ENCODE measurements at regions of chr7 and their contacts with region 1.

Region 1: DNA sequence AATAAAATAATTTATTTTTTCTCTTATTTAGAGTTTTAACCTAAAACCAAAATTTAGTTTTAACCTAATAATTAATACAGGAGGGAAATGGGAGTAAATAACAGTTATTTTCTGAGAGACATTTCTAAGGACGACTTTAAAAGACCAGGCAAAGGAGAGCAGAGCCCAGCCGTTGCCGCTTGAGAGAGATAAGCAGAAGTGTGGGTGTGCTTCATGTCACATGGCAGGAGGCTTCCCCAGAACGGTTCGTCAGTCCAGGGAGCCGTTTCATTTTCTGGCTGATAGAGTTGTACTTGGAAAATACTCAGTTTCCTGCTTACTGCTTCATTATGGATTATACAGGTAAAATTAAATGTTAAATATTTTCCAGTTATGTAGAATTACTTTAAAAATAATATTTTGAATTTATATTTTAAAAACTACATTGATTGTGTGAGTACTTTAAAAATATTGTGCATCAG is 61.4 kb downstream of the ST7 start:
- DNase-seq: peak; percentile 84

Region 2: DNA sequence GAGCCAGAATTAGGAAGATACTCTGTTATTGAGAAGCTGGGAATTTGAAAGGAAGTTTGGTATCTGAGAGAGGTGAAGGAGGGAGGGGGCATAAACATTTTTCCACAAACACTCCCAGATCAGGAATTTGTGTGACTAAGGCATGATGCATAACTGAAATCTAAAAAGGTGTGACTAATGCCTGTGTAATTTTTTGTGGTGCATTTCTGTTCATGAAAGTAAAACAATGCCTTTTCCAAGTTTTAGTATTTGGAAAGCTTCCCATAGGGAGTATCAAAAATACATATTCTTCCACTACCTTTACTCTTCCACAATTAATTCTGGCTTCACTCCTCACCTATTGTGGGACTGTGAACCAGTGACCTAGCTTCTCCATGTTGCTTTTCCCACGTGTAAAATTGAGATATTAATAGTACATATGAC is 571.6 kb before region 1 on chr7:
- in situ Hi-C with region 1: no loop called
- DNase-seq: no peak

Region 3: DNA sequence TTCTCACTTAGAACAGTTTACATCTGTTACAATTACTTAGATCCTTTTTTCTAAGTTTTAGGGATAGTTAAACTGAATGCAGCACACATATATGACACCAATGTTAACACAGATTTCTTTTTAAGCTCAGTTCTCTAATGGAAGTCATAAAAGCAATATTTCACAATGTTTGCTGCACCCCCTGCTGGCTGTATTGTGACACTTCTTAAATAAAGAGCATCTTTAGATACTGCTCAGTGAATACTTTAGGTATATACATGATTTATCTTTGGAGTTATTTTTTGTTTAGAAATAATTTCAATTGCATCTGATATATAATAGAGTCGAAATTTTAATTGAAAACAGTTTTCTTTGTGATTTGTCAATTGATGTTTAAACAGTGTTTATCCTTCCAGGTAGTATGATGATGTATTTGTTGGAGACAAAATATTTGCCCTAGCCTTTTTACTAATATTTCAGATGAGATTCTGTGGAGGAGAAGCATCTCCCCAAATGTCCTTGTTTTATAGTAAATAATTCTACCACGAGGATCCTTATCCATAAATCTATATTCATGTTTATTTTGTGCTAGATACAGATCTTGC is 113.0 kb after region 1 on chr7:
- in situ Hi-C with region 1: loop called (anchors 5 kb)
- DNase-seq: peak; percentile 80

Region 4: DNA sequence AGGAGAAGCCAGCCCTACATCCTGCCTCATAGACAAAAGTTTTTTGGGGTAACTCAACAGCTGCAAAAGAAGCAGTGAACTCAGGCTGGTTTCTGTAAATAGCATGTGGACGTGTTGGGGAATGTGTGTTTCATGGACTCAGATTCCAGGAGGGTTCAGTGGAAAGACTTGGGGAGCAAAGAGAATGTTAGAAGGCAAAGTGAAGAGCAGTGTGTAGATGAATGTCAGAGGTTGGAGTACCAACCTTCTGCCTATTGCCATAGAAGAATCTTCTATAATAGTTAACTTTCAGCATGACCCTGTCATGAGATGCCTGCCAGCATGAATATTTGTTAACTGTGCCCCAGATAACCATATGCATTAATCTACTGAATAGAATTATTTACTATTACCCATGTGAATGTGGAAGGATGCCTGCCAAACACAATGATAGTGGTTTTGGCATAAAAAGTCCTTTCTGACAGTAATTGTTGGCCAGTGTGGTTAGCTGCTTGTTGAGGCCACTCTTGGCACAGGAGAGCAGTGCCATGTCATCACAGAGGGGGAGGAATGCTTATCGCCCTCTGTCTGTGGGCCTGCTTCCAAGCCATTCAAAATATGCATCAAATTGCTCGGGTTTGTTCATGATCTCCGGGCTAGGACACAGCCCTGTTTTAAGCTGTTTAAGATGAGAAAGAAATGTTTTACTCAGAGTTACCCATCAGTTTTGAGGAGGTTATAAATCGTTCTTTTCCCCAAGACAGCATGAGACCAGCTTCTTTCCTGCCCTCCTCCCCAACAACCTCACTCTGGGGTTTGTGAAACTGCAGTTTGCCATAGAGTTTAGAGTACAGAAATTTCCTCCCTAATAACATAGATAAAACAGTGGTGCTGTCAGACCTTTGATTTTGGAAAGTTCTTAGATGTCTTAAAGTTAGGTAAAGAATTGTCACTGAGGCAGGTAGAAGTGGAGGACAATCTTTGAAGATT is 142.8 kb after region 1 on chr7:
- in situ Hi-C with region 1: no loop called
- DNase-seq: peak; percentile 67